Activated CD8-positive, alpha-beta T cell treated with anti-CD3 and anti-CD28 coated beads, Interleukin-2, amount 10 ng/mL, durations not matched to agents 7 days and 5 days (primary cell): ENCODE measurements at regions of chr4 and their contacts with region 1.

Region 1: GRCh38 chr4:77852892-77853495 is 9.6 kb upstream of the MRPL1 start:
- DNase-seq: peak; percentile 87
- ATAC-seq: peak; percentile 91
- H3K4me3 Mint-ChIP-seq: peak overlapping the region; percentile 67
- H3K27ac Mint-ChIP-seq: peak overlapping the region; percentile 93
- H3K4me1 Mint-ChIP-seq: peaks cover 63% of the 10 kb centered on the region
- H3K27me3 Mint-ChIP-seq: no peaks in the 10 kb centered on the region

Region 2: DNA sequence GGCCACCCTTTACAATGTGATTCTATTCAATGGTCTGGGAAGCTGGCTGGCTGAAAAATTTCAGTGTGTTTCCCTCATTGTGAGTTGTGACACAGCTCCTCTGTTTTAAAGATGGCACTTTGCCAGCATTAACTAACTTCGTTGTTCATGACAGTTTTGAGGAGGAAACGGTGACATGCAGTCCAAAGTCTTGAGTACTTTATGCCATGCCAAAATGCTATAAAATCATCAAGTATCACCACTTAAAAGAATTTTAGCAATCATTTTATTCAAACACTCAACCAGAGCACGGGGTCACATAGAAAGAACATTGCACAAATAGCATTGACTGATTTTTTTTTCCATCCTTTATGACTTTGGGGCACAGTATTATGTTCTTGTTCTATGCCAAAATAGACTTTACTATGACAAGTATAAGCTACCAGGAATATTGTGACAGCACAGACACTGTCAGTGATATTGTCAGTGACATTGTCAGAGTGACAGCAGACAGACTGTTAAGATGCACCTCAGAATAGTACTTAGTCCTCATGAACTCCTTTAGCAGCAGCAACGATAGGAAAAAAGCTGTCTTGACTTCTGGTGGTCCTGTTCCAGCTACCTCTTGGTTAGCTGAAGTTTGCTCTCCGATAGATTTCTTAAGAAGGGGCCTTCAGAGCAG is 200.6 kb before region 1 on chr4:
- CTCF ChIA-PET with region 1: no interaction called
- POLR2A ChIA-PET with region 1: no interaction called
- DNase-seq: no peak
- ATAC-seq: no peak
- H3K4me3 Mint-ChIP-seq: no peak overlapping the region
- H3K27ac Mint-ChIP-seq: no peak overlapping the region
- H3K4me1 Mint-ChIP-seq: no peaks in the 10 kb centered on the region
- H3K27me3 Mint-ChIP-seq: peaks cover 15% of the 10 kb centered on the region

Region 3: DNA sequence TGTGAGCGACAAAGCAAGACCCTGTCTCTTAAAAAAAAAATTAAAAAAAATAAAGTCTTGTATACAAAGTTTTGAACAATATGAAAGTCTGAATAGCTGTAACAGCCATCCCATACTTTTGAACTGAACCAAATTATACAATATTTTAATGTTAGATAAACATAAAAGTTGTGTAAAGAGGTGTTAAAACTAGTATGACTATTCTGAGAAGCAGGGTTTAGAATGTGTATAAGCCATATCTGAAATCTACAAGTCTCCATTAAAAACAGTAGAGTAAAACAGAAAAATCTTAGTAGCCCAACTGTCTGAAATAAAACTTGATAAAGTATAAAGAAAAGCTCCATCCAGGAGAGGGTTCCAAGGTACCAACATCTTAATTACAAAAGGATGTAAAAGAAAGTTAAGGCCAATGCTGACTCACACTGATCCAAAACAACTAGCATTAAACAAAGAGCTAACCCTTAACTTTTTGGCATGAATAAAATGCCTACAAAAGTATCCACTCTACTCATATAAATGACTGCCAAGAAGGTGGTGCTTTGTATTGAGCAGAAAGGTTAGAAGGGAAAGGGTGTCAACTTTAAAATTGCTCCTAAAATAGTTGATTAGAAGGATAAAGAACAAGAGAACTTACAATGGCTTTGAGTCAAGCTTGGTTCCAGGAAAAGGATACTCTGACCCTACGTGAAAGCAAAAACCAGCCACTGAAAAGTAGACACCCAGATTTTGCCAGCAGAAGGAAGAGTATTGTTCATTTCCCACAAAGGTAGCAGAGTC is 52.3 kb before region 1 on chr4:
- CTCF ChIA-PET with region 1: interaction called, 4 read pairs
- POLR2A ChIA-PET with region 1: interaction called, 10 read pairs
- DNase-seq: no peak
- ATAC-seq: peak; percentile 59
- H3K4me3 Mint-ChIP-seq: peak overlapping the region; percentile 59
- H3K27ac Mint-ChIP-seq: peak overlapping the region; percentile 80
- H3K4me1 Mint-ChIP-seq: peaks cover 63% of the 10 kb centered on the region
- H3K27me3 Mint-ChIP-seq: no peaks in the 10 kb centered on the region

Region 4: GRCh38 chr4:77921701-77922100 is 68.7 kb after region 1 on chr4:
- CTCF ChIA-PET with region 1: no interaction called
- POLR2A ChIA-PET with region 1: no interaction called
- DNase-seq: no peak
- ATAC-seq: no peak
- H3K4me3 Mint-ChIP-seq: no peak overlapping the region
- H3K27ac Mint-ChIP-seq: no peak overlapping the region
- H3K4me1 Mint-ChIP-seq: peaks cover 5% of the 10 kb centered on the region
- H3K27me3 Mint-ChIP-seq: no peaks in the 10 kb centered on the region